Heart right ventricle (tissue), 16 donors: ENCODE measurements at regions of chr17 and their contacts with region 1.

Region 1: GRCh38 chr17:49670641-49671040 is 7.3 kb downstream of the SPOP start:
- DNase-seq: no peak
- ATAC-seq: no peak
- H3K4me3 ChIP-seq: no peak overlapping the region
- H3K27ac ChIP-seq: peak overlapping the region in 4 of 10 donors; percentile 8 to 38 (median 32)
- H3K4me1 ChIP-seq: peaks cover 3 to 71% (median 54%) of the 10 kb centered on the region in 9 donors
- H3K27me3 ChIP-seq: no peaks in the 10 kb centered on the region
- CTCF ChIP-seq: no peak

Region 2: DNA sequence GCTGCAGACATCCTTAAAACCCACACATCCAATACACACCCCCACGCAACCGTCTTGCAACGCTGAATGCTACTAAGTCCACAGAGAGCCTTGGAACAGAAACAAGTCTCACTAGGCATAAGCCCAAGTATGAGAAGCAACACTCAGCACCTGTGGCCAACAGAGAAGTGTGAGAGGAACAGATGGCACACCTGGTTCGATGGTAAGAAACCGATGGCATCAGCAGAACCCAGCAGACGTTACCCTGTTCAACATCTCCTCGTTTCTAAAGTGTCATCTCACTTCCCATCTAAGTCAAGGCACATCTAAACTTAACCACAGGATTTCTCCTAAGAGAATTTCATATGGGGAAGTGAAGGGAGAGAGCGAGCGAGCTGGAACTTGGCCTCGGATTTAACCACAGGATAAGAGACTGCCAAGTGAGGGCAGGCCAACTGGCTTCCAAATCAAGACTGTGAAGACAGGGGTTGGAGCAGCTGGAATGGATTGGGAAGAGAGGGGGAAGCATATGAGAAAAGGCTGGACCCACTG is 54.0 kb before region 1 on chr17:
- intact Hi-C with region 1: loop called in 5 of 10 experiments (anchors 5 to 10 kb)
- DNase-seq: peak; percentile 65 to 74
- ATAC-seq: peak; percentile 81 to 92 (median 84)
- H3K4me3 ChIP-seq: peak overlapping the region in 1 of 10 donors; percentile 3
- H3K27ac ChIP-seq: peak overlapping the region in 9 of 10 donors; percentile 2 to 70 (median 59)
- H3K4me1 ChIP-seq: peaks cover 4 to 70% (median 42%) of the 10 kb centered on the region in 9 donors
- H3K27me3 ChIP-seq: no peaks in the 10 kb centered on the region
- CTCF ChIP-seq: no peak